ENCODE measurements at regions of chr1 and their contacts with region 1.

Region 1: DNA sequence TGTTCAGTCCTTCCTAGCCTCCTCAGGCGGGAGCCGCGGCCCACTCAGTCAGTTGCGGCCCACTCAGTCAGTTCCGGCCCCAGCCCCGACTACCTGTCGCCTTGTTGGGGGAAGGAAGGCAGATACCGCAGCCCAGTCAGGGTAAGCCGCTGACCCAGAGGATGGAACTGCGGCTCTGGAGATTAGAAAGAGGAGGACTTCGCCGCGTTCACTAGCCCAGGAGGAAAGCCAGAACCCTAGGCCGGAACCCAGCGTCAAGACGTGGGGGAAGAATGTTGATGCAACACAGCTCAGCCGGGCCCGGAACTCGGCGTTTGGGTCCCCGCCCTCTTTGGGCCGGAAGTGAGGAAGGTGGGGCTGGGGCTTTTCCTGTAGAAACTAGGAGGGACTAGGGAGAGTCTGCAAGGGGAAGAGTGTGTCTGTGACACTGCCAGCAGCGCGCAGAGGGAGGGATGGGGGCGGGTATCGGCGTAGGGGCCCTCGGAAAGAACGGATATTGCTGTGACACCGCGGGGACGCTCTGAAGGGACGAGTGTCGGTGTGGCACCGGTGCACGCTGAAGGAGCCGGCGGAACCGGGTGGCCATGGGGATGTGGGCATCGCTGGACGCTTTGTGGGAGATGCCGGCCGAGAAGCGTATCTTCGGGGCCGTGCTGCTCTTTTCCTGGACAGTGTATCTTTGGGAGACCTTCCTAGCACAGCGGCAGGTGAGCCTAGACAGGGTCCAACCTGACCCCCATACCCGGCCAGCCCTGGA is at the start of gene ZMPSTE24:
- DNase-seq: peak; percentile 97
- H3K4me3 ChIP-seq: peak within 1 kb of the TSS; percentile 83
- H3K27ac ChIP-seq: peak within 1 kb of the TSS; percentile 96
- H3K4me1 ChIP-seq: no peaks in the 10 kb centered on the region
- H3K27me3 ChIP-seq: no peaks in the 10 kb centered on the region
- CTCF ChIP-seq: no peak
- total RNA-seq, gene ZMPSTE24: 49.7 to 62.8 TPM

Region 2: DNA sequence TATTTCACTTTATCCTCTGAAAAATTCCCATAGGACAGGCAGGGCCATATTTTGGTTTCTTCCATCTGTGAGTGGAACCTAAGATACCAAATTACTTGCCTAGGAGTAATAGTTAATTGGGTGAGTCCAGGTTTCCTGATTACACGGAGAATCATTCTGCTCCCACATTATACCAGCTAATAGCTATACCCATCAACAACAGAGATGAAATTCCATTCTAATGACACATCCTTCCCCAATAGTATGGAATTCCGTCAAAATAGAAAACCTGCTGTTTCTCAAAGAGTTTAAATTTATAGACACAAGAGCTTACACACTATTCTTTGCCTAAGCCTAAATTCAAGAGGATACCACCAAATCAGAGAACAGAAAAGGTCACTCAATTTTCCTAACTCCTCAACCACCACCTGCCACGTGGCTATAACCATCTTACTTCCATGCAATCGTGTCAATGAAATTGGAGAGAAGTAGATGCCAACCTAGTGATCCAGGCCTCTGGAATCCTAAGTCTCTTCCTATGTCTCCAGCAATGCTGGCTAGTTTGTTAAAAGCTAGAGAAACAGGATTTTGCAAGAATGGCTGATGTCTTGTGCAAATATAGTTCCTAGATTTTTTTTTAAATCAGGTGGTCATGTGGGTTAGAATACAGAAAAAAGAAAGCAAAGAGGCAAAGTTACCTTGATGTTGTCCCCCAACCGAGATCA is 167.1 kb before region 1 on chr1:
- intact Hi-C with region 1: no loop called
- DNase-seq: no peak
- H3K4me3 ChIP-seq: no peak overlapping the region
- H3K27ac ChIP-seq: no peak overlapping the region
- H3K4me1 ChIP-seq: no peaks in the 10 kb centered on the region
- H3K27me3 ChIP-seq: no peaks in the 10 kb centered on the region
- CTCF ChIP-seq: no peak

Region 3: GRCh38 chr1:40161125-40161887 is 96.6 kb before region 1 on chr1 and contains the start of gene RLF:
- intact Hi-C with region 1: loop called (anchors 2 kb)
- DNase-seq: peak; percentile 95
- H3K4me3 ChIP-seq: peak within 1 kb of the TSS; percentile 78
- H3K27ac ChIP-seq: peak within 1 kb of the TSS; percentile 90
- H3K4me1 ChIP-seq: peaks cover 4% of the 10 kb centered on the region
- H3K27me3 ChIP-seq: no peaks in the 10 kb centered on the region
- CTCF ChIP-seq: no peak
- total RNA-seq, gene RLF: 11.5 to 21.0 TPM

Measured in colonic mucosa (tissue), 4 donors.